MCF 10A (cell line): ENCODE measurements at regions of chr4 and their contacts with region 1.

Region 1: DNA sequence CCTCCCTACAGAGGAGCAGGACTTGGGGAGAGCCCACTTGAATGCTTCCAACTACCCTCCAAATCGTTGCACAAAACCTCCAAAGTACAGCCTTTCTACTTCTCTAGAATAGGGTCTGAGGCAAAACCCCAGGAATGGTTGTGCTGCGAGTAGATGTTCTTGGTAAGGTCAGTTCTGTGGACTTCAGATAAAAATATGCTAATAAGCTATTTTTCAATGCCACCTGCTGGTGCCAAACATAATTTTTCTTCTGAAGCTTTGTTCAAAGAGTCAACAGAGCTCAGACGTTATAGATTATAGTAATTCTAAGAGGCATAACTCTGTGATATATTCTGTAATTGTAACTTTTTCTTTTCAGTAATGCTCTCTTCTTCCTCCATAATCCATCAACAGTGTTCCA is 425.7 kb downstream of the GPAT3 start:
- DNase-seq: peak; percentile 39
- H3K4me3 Mint-ChIP-seq: no peak overlapping the region
- H3K27ac Mint-ChIP-seq: no peak overlapping the region
- H3K4me1 Mint-ChIP-seq: no peaks in the 10 kb centered on the region
- H3K27me3 Mint-ChIP-seq: no peaks in the 10 kb centered on the region
- CTCF ChIP-seq: peak; percentile 41

Region 2: GRCh38 chr4:83780053-83780728 is 181.4 kb before region 1 on chr4:
- CTCF ChIA-PET with region 1: interaction called, 31 read pairs
- POLR2A ChIA-PET with region 1: interaction called, 3 read pairs
- intact Hi-C with region 1: loop called (anchors 2 kb)
- DNase-seq: peak; percentile 29
- H3K4me3 Mint-ChIP-seq: no peak overlapping the region
- H3K27ac Mint-ChIP-seq: no peak overlapping the region
- H3K4me1 Mint-ChIP-seq: peaks cover 6% of the 10 kb centered on the region
- H3K27me3 Mint-ChIP-seq: no peaks in the 10 kb centered on the region
- CTCF ChIP-seq: peak; percentile 32

Region 3: DNA sequence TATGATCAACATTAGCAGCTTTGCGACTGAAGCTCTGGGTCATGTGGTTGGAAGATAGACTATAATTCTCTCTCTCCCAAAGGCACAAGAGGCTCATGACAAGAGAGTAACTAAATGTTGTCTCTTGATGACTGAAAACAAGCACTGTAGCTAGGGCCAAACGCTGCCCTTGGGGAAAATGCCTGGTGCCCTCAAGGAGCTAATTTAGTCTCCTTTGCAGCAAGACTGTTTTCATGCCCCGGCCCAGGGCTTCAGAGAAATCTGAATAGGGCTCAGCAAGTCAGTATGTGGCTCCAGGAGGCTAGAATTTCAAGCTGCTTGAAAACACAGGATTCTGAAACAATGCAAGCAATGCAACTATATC is 13.8 kb before region 1 on chr4:
- CTCF ChIA-PET with region 1: interaction called, 19 read pairs
- POLR2A ChIA-PET with region 1: no interaction called
- intact Hi-C with region 1: no loop called
- DNase-seq: no peak
- H3K4me3 Mint-ChIP-seq: no peak overlapping the region
- H3K27ac Mint-ChIP-seq: no peak overlapping the region
- H3K4me1 Mint-ChIP-seq: no peaks in the 10 kb centered on the region
- H3K27me3 Mint-ChIP-seq: no peaks in the 10 kb centered on the region
- CTCF ChIP-seq: no peak

Region 4: DNA sequence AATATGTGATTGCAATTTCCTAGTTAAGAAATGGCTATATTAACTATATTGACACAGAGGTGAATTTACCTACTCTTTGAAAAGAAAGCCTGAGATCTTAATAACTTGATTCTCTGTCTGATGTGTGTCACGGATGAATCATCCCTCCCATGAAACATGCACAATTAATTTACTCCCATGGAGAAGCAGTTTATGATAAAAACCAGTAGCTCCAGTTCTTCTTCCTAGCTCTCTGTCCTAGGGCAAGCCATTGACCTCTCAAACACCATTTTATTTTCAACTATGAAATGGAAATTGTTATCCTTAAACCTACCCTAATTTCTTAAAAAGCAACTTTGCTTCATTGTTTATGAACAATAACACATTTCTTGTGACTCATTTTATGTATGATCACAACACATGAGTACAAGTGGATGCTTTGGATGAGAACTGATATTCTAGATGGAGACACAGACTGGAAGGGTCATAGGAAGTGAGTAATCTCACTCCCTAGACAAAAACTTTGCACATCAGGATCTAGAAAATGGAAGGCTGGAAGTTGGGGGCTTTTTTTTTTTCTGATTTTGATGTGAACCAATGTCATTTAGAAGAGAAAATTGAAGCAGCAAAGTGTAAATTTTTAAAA is 12.7 kb after region 1 on chr4:
- CTCF ChIA-PET with region 1: interaction called, 19 read pairs
- POLR2A ChIA-PET with region 1: no interaction called
- intact Hi-C with region 1: no loop called
- DNase-seq: peak; percentile 21
- H3K4me3 Mint-ChIP-seq: no peak overlapping the region
- H3K27ac Mint-ChIP-seq: no peak overlapping the region
- H3K4me1 Mint-ChIP-seq: peaks cover 7% of the 10 kb centered on the region
- H3K27me3 Mint-ChIP-seq: no peaks in the 10 kb centered on the region
- CTCF ChIP-seq: no peak

Region 5: GRCh38 chr4:84258905-84259830 is 297.6 kb after region 1 on chr4:
- CTCF ChIA-PET with region 1: no interaction called
- POLR2A ChIA-PET with region 1: no interaction called
- intact Hi-C with region 1: loop called (anchors 5 kb)
- DNase-seq: peak; percentile 53
- H3K4me3 Mint-ChIP-seq: no peak overlapping the region
- H3K27ac Mint-ChIP-seq: no peak overlapping the region
- H3K4me1 Mint-ChIP-seq: peaks cover 5% of the 10 kb centered on the region
- H3K27me3 Mint-ChIP-seq: peaks cover 80% of the 10 kb centered on the region
- CTCF ChIP-seq: peak; percentile 69

Region 6: GRCh38 chr4:84726356-84726755 is 764.8 kb after region 1 on chr4:
- CTCF ChIA-PET with region 1: no interaction called
- POLR2A ChIA-PET with region 1: no interaction called
- intact Hi-C with region 1: no loop called
- DNase-seq: no peak
- H3K4me3 Mint-ChIP-seq: no peak overlapping the region
- H3K27ac Mint-ChIP-seq: no peak overlapping the region
- H3K4me1 Mint-ChIP-seq: no peaks in the 10 kb centered on the region
- H3K27me3 Mint-ChIP-seq: no peaks in the 10 kb centered on the region
- CTCF ChIP-seq: no peak